CD4-positive, alpha-beta T cell (primary cell): ENCODE measurements at regions of chr9 and their contacts with region 1.

Region 1: GRCh38 chr9:81234924-81235610 is 454.3 kb downstream of the TLE1 start:
- DNase-seq: no peak
- ATAC-seq: no peak
- H3K4me3 ChIP-seq: no peak overlapping the region
- H3K4me3 Mint-ChIP-seq: no peak overlapping the region
- H3K27ac ChIP-seq: no peak overlapping the region
- H3K27ac Mint-ChIP-seq: no peak overlapping the region
- H3K4me1 ChIP-seq: no peaks in the 10 kb centered on the region
- H3K4me1 Mint-ChIP-seq: no peaks in the 10 kb centered on the region
- H3K27me3 ChIP-seq: no peaks in the 10 kb centered on the region
- H3K27me3 Mint-ChIP-seq: no peaks in the 10 kb centered on the region
- CTCF ChIP-seq: no peak

Region 2: DNA sequence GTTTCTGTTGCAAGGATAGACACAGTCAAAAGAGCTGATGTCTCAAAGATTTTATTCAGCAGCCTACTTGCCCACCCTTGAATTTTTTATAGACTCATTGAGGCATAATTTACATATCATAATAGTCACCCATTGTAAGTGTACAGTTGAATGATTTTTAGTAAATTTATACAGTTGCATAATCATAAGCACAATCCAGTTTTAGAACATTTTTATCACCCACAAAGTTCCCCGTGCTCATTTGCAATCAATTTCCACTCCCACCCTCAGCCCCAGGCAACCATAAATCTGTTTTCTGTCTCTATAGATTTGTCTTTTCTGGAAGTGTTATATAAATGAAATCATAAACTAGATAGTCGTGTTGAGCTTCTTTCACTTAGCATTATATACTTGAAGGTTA is 63.4 kb before region 1 on chr9:
- CTCF ChIA-PET with region 1: no interaction called
- POLR2A ChIA-PET with region 1: no interaction called
- intact Hi-C with region 1: no loop called
- DNase-seq: no peak
- ATAC-seq: no peak
- H3K4me3 ChIP-seq: no peak overlapping the region
- H3K4me3 Mint-ChIP-seq: no peak overlapping the region
- H3K27ac ChIP-seq: no peak overlapping the region
- H3K27ac Mint-ChIP-seq: no peak overlapping the region
- H3K4me1 ChIP-seq: no peaks in the 10 kb centered on the region
- H3K4me1 Mint-ChIP-seq: no peaks in the 10 kb centered on the region
- H3K27me3 ChIP-seq: no peaks in the 10 kb centered on the region
- H3K27me3 Mint-ChIP-seq: no peaks in the 10 kb centered on the region
- CTCF ChIP-seq: no peak

Region 3: DNA sequence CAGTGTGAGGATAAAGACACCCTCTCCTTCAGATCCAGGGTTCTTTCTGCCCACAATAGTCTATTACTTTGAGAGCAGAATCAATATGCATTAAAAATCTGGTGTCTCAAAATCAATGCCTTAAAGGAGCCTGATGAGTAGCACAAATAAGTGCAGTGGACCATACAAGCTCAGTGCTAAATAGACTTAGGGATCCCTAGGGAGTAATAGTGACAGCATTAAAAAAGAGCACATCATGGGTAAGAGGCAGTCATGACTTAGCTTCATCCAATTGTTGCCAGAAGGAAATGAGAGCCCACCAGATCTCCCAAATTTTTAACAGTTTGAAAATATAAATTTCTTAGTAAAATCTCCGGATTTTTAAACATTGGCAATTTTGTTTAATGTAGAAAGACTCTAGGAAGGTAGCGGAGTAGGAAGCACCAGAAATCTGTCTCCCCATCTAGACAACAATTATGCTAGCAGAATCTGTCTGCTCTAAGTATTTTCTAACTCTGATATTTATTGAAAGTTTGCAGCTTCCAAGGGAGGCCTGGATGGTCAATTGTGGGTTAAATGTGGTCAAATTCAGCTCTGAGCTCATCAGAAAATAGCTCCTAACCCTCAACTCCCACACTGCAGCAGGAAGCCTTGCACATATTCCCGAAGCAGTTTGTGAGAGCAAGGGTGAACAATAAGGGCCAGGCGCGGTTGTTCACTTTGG is 10.3 kb after region 1 on chr9:
- CTCF ChIA-PET with region 1: no interaction called
- POLR2A ChIA-PET with region 1: no interaction called
- intact Hi-C with region 1: no loop called
- DNase-seq: no peak
- ATAC-seq: no peak
- H3K4me3 ChIP-seq: no peak overlapping the region
- H3K4me3 Mint-ChIP-seq: no peak overlapping the region
- H3K27ac ChIP-seq: no peak overlapping the region
- H3K27ac Mint-ChIP-seq: no peak overlapping the region
- H3K4me1 ChIP-seq: no peaks in the 10 kb centered on the region
- H3K4me1 Mint-ChIP-seq: no peaks in the 10 kb centered on the region
- H3K27me3 ChIP-seq: no peaks in the 10 kb centered on the region
- H3K27me3 Mint-ChIP-seq: no peaks in the 10 kb centered on the region
- CTCF ChIP-seq: no peak

Region 4: DNA sequence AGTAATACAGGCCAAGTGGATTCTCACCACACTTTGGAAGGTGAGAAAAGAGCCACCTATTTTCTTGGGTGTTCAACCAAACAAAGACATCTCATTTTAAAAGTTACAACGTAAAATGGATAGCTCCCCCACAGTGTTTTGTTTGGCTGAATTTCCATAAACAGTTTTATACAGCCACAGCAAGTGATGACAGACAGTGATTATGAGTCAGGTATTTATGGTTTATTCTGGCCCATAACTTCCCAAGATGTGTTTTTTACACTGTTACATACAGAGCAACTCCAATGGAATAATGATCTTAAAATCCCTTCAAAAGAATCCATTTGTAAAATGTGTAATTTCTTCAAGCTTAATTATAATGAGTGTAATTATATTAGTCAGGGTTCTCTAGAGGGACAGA is 33.0 kb after region 1 on chr9:
- CTCF ChIA-PET with region 1: no interaction called
- POLR2A ChIA-PET with region 1: no interaction called
- intact Hi-C with region 1: loop called in 1 of 2 experiments (anchors 2 kb)
- DNase-seq: no peak
- ATAC-seq: no peak
- H3K4me3 ChIP-seq: no peak overlapping the region
- H3K4me3 Mint-ChIP-seq: no peak overlapping the region
- H3K27ac ChIP-seq: no peak overlapping the region
- H3K27ac Mint-ChIP-seq: no peak overlapping the region
- H3K4me1 ChIP-seq: no peaks in the 10 kb centered on the region
- H3K4me1 Mint-ChIP-seq: no peaks in the 10 kb centered on the region
- H3K27me3 ChIP-seq: no peaks in the 10 kb centered on the region
- H3K27me3 Mint-ChIP-seq: no peaks in the 10 kb centered on the region
- CTCF ChIP-seq: no peak

Region 5: GRCh38 chr9:81562231-81563019 is 327.4 kb after region 1 on chr9:
- CTCF ChIA-PET with region 1: no interaction called
- POLR2A ChIA-PET with region 1: no interaction called
- intact Hi-C with region 1: no loop called
- DNase-seq: no peak
- ATAC-seq: no peak
- H3K4me3 ChIP-seq: no peak overlapping the region
- H3K4me3 Mint-ChIP-seq: no peak overlapping the region
- H3K27ac ChIP-seq: no peak overlapping the region
- H3K27ac Mint-ChIP-seq: no peak overlapping the region
- H3K4me1 ChIP-seq: no peaks in the 10 kb centered on the region
- H3K4me1 Mint-ChIP-seq: no peaks in the 10 kb centered on the region
- H3K27me3 ChIP-seq: no peaks in the 10 kb centered on the region
- H3K27me3 Mint-ChIP-seq: no peaks in the 10 kb centered on the region
- CTCF ChIP-seq: no peak